ENCODE measurements at regions of chr15 and their contacts with region 1.

Region 1: DNA sequence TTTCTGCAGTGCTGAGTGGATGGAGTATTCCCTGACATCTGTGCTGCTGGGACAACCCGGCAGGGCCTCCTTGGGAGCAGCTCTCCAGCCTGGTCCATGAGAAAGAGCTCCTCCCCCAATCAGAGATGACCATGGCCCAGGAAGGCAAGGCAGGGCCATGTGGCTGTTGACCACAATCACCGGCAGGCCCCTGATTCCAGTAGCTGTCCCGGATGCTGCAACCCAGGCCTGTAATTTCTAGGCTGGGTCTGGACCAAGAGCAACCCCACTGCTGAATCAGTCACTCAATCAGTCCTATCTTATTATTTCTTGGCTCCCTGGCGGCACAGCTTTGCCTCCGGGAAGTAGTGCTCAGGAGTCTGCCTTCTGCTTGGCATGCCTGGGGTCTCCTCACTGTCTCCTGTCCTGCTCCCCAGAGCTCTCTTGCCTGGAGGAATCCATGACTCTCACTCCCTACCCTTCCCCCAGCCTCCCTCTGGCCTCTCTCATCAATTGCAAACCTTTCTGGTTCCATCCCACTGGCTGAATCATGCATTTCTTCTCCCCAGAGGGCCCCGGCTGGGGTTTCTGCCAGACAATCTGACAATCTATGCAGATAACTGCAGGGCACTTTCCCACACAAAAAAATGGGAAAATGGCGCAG is 32.6 kb upstream of the ITGA11 start:
- DNase-seq: no peak
- ATAC-seq: no peak; a peak in 1 of 6 replicates
- H3K4me3 ChIP-seq: no peak overlapping the region
- H3K27ac ChIP-seq: peak overlapping the region in 1 of 2 experiments; percentile 32; a peak in 1 of 6 replicates
- H3K4me1 ChIP-seq: peaks cover 6% of the 10 kb centered on the region; the same call in 2 of the 3 replicates
- CTCF ChIP-seq: no peak
- EP300 ChIP-seq: no peak
- POLR2A ChIP-seq: no peak
- RAD21 ChIP-seq: no peak

Region 2: GRCh38 chr15:68407042-68407885 is 57.3 kb before region 1 on chr15:
- CTCF ChIA-PET with region 1: no interaction called
- POLR2A ChIA-PET with region 1: no interaction called
- DNase-seq: no peak
- ATAC-seq: no peak
- H3K4me3 ChIP-seq: no peak overlapping the region
- H3K27ac ChIP-seq: peak overlapping the region in 1 of 2 experiments; percentile 39; a peak in 3 of 6 replicates
- H3K4me1 ChIP-seq: no peaks in the 10 kb centered on the region
- CTCF ChIP-seq: no peak
- EP300 ChIP-seq: no peak
- POLR2A ChIP-seq: no peak
- RAD21 ChIP-seq: no peak

Region 3: GRCh38 chr15:68447209-68447608 is 17.4 kb before region 1 on chr15:
- CTCF ChIA-PET with region 1: interaction called, 12 read pairs
- POLR2A ChIA-PET with region 1: no interaction called
- DNase-seq: no peak
- ATAC-seq: no peak
- H3K4me3 ChIP-seq: no peak overlapping the region
- H3K27ac ChIP-seq: no peak overlapping the region
- H3K4me1 ChIP-seq: no peaks in the 10 kb centered on the region
- CTCF ChIP-seq: no peak
- EP300 ChIP-seq: no peak
- POLR2A ChIP-seq: no peak
- RAD21 ChIP-seq: no peak

Region 4: GRCh38 chr15:68475449-68475848 is 10.9 kb after region 1 on chr15:
- CTCF ChIA-PET with region 1: interaction called, 11 read pairs
- POLR2A ChIA-PET with region 1: no interaction called
- DNase-seq: no peak
- ATAC-seq: no peak
- H3K4me3 ChIP-seq: no peak overlapping the region
- H3K27ac ChIP-seq: no peak overlapping the region
- H3K4me1 ChIP-seq: peaks cover 11% of the 10 kb centered on the region; the same call in 2 of the 3 replicates
- CTCF ChIP-seq: no peak
- EP300 ChIP-seq: no peak
- POLR2A ChIP-seq: no peak
- RAD21 ChIP-seq: no peak

Region 5: GRCh38 chr15:68485721-68486360 is 21.3 kb after region 1 on chr15:
- CTCF ChIA-PET with region 1: no interaction called
- POLR2A ChIA-PET with region 1: no interaction called
- DNase-seq: no peak
- ATAC-seq: no peak; a peak in 1 of 6 replicates
- H3K4me3 ChIP-seq: no peak overlapping the region
- H3K27ac ChIP-seq: peak overlapping the region in 1 of 2 experiments; percentile 55; a peak in 1 of 6 replicates
- H3K4me1 ChIP-seq: no peaks in the 10 kb centered on the region; the same call in 2 of the 3 replicates
- CTCF ChIP-seq: no peak
- EP300 ChIP-seq: no peak
- POLR2A ChIP-seq: no peak
- RAD21 ChIP-seq: no peak

Measured in A549 (cell line).